ENCODE measurements at regions of chr12 and their contacts with region 1.

Region 1: GRCh38 chr12:67515679-67516340 is 132.7 kb upstream of the DYRK2 start:
- DNase-seq: no peak
- H3K4me3 ChIP-seq: no peak overlapping the region
- H3K27ac ChIP-seq: no peak overlapping the region
- H3K4me1 ChIP-seq: peaks cover 10% of the 10 kb centered on the region
- H3K27me3 ChIP-seq: peaks cover 2% of the 10 kb centered on the region
- CTCF ChIP-seq: no peak

Region 2: DNA sequence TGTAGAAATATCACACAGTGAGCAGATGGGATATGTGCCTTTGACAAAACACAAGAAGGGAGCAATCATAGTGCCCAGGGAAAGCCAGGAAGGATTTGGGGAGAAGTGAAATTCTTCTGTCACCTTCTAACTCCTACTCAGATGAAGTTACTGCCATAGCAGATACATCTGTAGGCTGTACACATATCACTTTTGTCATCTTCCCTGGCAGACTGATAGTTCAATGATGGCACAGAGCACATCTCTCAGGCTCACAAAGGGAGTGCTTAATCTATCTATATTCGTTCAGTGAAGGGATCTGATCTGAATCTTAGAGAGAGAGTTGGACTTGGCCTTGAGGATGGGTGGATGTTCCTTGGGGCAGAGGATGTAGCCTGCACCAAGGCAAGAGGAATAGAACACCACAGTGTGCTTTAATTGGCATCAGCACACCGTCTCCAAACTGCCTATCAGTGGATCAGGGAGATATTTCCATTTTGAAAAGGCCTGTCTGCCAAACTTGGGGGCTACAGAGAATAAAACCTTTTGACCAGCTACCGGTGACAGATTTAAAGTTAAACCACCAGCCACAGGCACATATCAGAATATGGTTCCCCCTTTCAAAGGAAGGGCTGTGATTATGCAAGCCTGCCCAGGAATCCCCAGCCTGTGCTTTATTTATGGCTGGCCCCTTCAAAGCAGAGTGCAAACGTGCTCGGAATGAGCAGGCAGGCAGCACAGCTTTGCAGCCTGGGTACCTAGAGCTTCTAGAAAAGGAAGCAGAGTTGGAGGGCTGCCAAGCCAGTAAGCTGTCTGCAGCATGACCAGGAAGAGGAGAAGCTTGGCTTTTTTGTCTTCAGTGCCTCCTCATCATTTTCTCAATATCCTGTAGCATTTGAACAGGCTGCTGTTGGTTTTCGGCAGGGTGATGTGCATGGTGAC is 32.8 kb before region 1 on chr12:
- CTCF ChIA-PET with region 1: interaction called, 11 read pairs
- dilution Hi-C with region 1: no loop called
- in situ Hi-C with region 1: no loop called
- intact Hi-C with region 1: no loop called
- DNase-seq: peak; percentile 9
- H3K4me3 ChIP-seq: no peak overlapping the region
- H3K27ac ChIP-seq: no peak overlapping the region
- H3K4me1 ChIP-seq: no peaks in the 10 kb centered on the region
- H3K27me3 ChIP-seq: no peaks in the 10 kb centered on the region
- CTCF ChIP-seq: no peak

Region 3: GRCh38 chr12:67592216-67593011 is 76.6 kb after region 1 on chr12:
- CTCF ChIA-PET with region 1: no interaction called
- dilution Hi-C with region 1: no loop called
- in situ Hi-C with region 1: no loop called
- intact Hi-C with region 1: loop called (anchors 2 kb)
- DNase-seq: peak; percentile 62
- H3K4me3 ChIP-seq: no peak overlapping the region
- H3K27ac ChIP-seq: peak overlapping the region; percentile 41
- H3K4me1 ChIP-seq: peaks cover 30% of the 10 kb centered on the region
- H3K27me3 ChIP-seq: no peaks in the 10 kb centered on the region
- CTCF ChIP-seq: no peak